Right ventricle myocardium superior (tissue), 1 donor: ENCODE measurements at regions of chr1 and their contacts with region 1.

Region 1: DNA sequence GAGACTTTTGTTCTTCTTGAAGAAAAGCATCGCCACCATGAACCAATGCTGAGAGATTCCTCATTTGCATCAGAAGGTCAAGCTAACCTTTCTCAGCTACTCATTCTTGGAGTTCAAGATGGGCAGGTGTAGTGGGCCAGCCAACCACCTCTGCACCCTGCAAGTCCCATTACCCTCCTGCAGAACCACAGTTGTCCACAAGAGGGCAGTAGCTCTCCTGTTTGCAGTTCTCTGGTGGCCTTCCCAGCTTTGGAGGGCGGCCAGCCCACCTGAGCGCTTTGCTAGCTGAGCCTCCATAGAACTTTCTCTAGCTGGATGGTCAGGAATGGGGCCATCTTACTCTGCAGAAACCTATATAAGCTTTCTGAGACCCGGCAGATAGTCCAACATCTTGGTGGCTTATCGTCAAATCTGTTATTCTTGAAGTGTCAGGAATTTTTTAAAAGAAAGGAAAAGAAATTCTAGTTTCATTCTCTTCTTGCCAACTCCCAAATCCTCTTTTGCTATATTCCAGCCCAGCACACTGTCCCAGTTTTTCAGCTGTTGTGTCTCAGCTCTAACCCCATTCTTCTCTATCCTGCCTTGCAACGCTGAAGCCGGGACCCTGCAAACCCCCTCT is 11.0 kb upstream of the LMX1A start:
- DNase-seq: peak; percentile 79
- ATAC-seq: peak; percentile 73

Region 2: DNA sequence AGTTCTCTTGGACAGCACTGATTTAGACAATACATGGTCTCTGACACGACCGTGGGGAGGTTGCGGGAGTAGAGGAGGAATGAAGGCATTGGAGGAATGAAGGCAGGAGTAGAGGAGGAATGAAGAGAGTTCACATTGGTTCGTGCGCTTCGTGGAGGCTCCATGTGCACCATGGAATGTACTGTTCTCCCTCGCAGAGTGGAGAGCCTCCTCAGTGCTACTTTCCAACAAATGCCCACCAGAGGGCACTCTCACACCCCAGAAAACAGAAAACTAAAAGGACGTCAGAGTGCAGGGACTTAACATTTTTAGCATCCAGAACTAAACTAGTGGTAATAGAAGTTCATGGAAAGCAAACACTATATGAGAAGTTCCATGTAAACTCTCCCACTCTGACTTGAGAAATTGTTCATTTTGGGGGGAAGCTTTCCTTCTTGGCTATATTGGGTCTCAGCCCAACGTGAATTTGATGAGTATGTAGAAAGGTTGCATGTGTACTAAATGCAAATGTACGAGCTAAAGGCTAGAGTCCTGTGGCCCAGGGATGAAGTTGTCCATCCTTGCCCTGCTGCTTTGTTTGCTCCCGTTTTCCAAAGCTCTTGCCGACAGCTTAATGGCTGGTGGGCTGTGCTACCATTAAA is 222.6 kb before region 1 on chr1:
- intact Hi-C with region 1: loop called (anchors 5 kb)
- DNase-seq: no peak
- ATAC-seq: peak; percentile 79

Region 3: DNA sequence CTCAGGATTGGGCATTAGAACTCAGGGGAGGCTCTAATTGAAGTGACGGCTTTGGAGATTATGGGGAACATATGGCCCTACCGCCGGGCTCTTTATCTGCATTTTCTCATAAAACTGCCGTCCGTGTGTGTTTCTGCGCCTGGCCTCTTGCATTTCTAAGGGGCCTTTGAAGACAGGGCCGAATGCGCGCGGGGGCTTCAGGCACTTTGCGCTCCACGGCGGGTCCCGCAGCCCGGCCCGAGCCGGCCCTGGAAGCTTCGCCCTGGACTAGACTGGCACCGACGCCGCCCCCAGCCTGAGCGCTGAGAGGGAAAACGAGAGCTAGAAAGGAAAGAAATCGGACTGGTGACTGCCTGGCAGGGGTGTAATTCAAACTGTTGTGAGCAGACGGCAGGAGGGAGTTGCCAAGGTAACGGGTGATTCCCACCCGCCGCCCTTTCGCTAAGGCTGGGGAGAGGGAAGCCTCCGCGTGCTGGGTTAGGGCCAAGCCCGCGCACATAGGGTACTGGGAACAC is 131.7 kb before region 1 on chr1:
- intact Hi-C with region 1: no loop called
- DNase-seq: no peak
- ATAC-seq: peak; percentile 46

Region 4: DNA sequence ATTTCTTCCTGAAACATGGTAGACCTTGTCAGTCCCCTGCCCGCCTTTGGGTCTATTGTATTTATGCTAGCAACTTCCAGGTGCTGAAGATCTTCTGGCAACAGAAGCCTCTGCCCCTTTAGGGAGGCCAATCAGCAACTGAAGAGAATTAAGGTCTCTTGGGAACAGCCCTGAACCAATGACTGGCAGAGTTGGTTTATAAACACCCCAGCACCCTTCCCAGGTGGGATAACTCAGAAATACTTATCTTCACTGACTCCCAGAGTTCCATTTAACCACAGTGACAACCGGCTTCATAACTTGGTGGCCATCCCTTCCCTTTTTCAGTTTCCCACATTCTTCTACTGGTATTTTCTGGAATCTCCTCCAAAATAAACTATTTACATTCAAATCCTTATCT is 428.4 kb after region 1 on chr1:
- intact Hi-C with region 1: no loop called
- DNase-seq: no peak
- ATAC-seq: no peak